HepG2 (cell line): ENCODE measurements at regions of chr14 and their contacts with region 1.

Region 1: GRCh38 chr14:24093901-24094761 is at the start of gene PCK2:
- DNase-seq: peak; percentile 99
- ATAC-seq: peak; percentile 86
- H3K4me3 ChIP-seq: peak within 1 kb of the TSS; percentile 86 to 98 (median 97)
- H3K27ac ChIP-seq: peak within 1 kb of the TSS; percentile 87
- H3K4me1 ChIP-seq: peaks cover 62% of the 10 kb centered on the region
- H3K27me3 ChIP-seq: peaks cover 0 to 6% of the 10 kb centered on the region in 2 experiments; a peak in 1 of 5 replicates
- CTCF ChIP-seq: peak; percentile 66
- EP300 ChIP-seq: peak; percentile 23 to 86; a peak in 3 of 4 replicates
- POLR2A ChIP-seq: peak in 1 of 2 experiments; percentile 98; a peak in 2 of 4 replicates
- RAD21 ChIP-seq: peak; percentile 83
- total RNA-seq, gene PCK2: 118 and 129 TPM in 2 replicates

Region 2: DNA sequence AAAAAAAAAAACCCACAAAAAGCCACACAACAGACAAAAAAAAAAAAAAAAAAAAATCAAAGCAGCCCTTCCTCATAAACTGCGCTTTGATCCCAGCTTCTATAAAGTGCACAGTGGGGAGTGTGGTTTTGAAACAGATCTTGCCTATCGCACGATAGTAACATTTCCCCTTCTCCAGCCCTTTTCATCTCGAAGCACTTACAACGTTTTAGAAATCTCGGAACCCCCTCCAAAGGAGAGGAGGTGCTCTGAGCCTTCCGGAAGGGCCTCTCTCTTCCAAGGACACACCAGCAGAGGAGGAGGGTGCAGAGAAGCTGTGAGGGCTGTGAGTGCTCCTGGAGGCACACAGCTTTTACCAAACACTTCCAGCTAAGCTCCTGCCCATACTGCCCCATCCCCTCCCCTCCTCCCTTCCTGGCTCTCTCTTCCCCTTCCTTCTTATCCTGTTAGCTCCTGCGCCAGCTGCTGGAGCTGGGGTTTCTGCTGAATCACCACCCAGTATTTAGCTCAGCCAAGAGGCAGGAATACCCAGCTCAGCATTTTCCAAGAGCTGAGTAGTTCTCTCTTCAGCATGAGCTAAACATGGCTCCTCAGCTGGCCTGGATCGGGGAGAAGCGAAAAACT is 939.1 kb before region 1 on chr14:
- CTCF ChIA-PET with region 1: no interaction called
- POLR2A ChIA-PET with region 1: no interaction called
- in situ Hi-C with region 1: no loop called
- intact Hi-C with region 1: no loop called
- DNase-seq: no peak
- ATAC-seq: peak; percentile 6; the same call in 1 of the 3 replicates
- H3K4me3 ChIP-seq: no peak overlapping the region
- H3K27ac ChIP-seq: no peak overlapping the region
- H3K4me1 ChIP-seq: no peaks in the 10 kb centered on the region
- H3K27me3 ChIP-seq: peaks cover 12 to 71% of the 10 kb centered on the region in 2 experiments
- CTCF ChIP-seq: no peak
- EP300 ChIP-seq: no peak
- POLR2A ChIP-seq: no peak
- RAD21 ChIP-seq: no peak

Region 3: DNA sequence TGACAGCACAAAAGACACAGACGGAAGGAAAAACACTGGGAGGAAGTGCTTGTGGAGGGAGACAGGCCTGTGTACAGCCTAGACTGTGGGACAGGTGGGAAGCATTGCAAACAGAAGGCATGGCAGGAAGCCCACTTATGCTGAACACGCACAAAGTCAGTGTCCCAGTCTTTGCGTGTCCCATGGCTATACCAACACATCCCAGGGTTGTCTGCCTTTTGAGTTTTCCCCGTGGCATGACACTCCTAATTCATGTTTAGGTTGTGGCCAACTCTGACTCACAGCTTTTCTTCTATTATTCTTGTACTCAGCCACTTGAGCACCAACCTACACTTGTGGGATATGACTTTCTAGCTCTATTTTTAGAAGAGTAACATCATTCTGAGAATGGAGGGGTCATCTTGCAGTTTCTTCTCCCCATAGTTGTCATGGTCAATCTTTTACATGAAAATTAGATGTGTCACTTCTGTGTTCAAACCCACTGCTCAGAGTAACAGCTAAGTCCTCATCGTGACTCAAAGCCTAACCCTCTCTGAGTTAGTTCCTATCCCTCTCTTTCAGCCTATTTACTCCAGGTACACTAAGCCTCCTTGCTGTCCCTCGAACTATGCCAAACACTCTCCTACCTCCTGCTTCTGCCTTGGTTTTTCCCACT is 488.1 kb before region 1 on chr14:
- CTCF ChIA-PET with region 1: no interaction called
- POLR2A ChIA-PET with region 1: interaction called, 6 read pairs
- in situ Hi-C with region 1: no loop called
- intact Hi-C with region 1: loop called (anchors 5 kb)
- DNase-seq: no peak
- ATAC-seq: no peak
- H3K4me3 ChIP-seq: no peak overlapping the region
- H3K27ac ChIP-seq: no peak overlapping the region
- H3K4me1 ChIP-seq: peaks cover 88% of the 10 kb centered on the region
- H3K27me3 ChIP-seq: no peaks in the 10 kb centered on the region
- CTCF ChIP-seq: no peak
- EP300 ChIP-seq: no peak
- POLR2A ChIP-seq: 0 out of 4 replicates have a peak, but pooled peaks of 1 of the 2 experiments have one; percentile 7
- RAD21 ChIP-seq: no peak

Region 4: GRCh38 chr14:24051789-24052655 is 42.1 kb before region 1 on chr14 and contains the start of gene CARMIL3:
- CTCF ChIA-PET with region 1: interaction called, 109 read pairs
- POLR2A ChIA-PET with region 1: interaction called, 226 read pairs
- in situ Hi-C with region 1: loop called (anchors 5 kb)
- intact Hi-C with region 1: no loop called
- DNase-seq: peak; percentile 56
- ATAC-seq: peak; percentile 85
- H3K4me3 ChIP-seq: peak within 1 kb of the TSS; percentile 61 to 85 (median 71)
- H3K27ac ChIP-seq: no peak within 1 kb of the TSS
- H3K4me1 ChIP-seq: peaks cover 31% of the 10 kb centered on the region
- H3K27me3 ChIP-seq: peaks cover 20 to 77% of the 10 kb centered on the region in 2 experiments
- CTCF ChIP-seq: 0 out of 2 replicates have a peak, but pooled peaks have one; percentile 7
- EP300 ChIP-seq: no peak
- POLR2A ChIP-seq: no peak
- RAD21 ChIP-seq: peak; percentile 35; the same call in 1 of the 2 replicates
- total RNA-seq, gene CARMIL3: 0.13 and 0.27 TPM in 2 replicates

Region 5: GRCh38 chr14:24108336-24108874 is 14.3 kb after region 1 on chr14:
- CTCF ChIA-PET with region 1: interaction called, 31 read pairs
- POLR2A ChIA-PET with region 1: interaction called, 627 read pairs
- in situ Hi-C with region 1: no loop called
- intact Hi-C with region 1: loop called (anchors 1 kb)
- DNase-seq: no peak
- ATAC-seq: no peak
- H3K4me3 ChIP-seq: no peak overlapping the region
- H3K27ac ChIP-seq: no peak overlapping the region
- H3K4me1 ChIP-seq: peaks cover 60% of the 10 kb centered on the region
- H3K27me3 ChIP-seq: no peaks in the 10 kb centered on the region
- CTCF ChIP-seq: no peak
- EP300 ChIP-seq: no peak
- POLR2A ChIP-seq: no peak
- RAD21 ChIP-seq: no peak

Region 6: DNA sequence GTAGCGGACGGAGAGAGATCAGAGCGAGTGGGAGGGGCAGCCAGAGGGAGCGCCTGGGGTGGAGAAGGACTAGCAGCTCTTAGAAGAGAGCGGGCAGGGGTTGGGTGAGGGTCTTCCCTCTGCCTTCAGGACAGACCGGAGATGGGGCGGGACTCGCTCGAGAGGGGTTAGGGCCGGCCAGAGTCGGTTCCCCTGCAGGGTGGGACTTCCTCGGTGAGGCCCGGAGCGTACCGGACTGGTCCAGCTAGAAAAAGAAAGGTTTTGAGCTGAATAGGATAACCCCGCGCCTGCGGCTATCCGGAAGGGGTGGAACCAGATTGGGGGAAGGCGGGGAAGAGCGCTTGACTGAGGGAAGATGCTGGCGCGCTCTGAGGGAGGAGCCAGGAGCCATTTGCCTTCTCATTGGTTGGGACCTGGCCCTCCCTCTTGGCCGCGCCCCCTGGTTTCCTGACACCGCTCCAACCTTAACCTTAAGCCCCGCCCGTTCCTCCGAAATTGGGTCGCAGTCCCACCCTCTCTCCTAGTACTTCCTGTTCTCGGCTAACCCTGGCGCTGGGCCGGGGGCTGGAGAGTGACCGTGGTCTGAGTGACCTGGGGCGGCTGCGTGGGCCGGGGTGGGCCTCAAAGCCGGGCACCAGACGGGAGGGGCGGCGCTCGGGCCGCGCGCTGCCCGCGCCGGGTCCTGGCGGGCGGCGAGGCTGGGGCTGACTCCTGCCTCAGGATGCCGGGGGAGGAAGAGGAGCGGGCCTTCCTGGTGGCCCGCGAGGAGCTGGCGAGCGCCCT is 53.0 kb after region 1 on chr14 and contains the start of gene RNF31:
- CTCF ChIA-PET with region 1: no interaction called
- POLR2A ChIA-PET with region 1: interaction called, 181 read pairs
- in situ Hi-C with region 1: no loop called
- intact Hi-C with region 1: no loop called
- DNase-seq: peak; percentile 100
- ATAC-seq: peak; percentile 90
- H3K4me3 ChIP-seq: peak within 1 kb of the TSS; percentile 91 to 100 (median 96)
- H3K27ac ChIP-seq: peak within 1 kb of the TSS; percentile 76
- H3K4me1 ChIP-seq: peaks cover 59% of the 10 kb centered on the region
- H3K27me3 ChIP-seq: peaks cover 0 to 3% of the 10 kb centered on the region in 2 experiments; a peak in 1 of 5 replicates
- CTCF ChIP-seq: no peak; the same call in 1 of the 2 replicates
- EP300 ChIP-seq: no peak
- POLR2A ChIP-seq: peak in 1 of 2 experiments; percentile 67; a peak in 2 of 4 replicates
- RAD21 ChIP-seq: peak; percentile 39
- total RNA-seq, gene RNF31: 65.9 and 86.8 TPM in 2 replicates

Region 7: GRCh38 chr14:24215495-24216344 is 121.6 kb after region 1 on chr14 and contains the start of gene MDP1:
- CTCF ChIA-PET with region 1: no interaction called
- POLR2A ChIA-PET with region 1: interaction called, 75 read pairs
- in situ Hi-C with region 1: no loop called
- intact Hi-C with region 1: no loop called
- DNase-seq: peak; percentile 95
- ATAC-seq: peak; percentile 81
- H3K4me3 ChIP-seq: peak within 1 kb of the TSS; percentile 67 to 98 (median 81)
- H3K27ac ChIP-seq: peak within 1 kb of the TSS; percentile 72
- H3K4me1 ChIP-seq: peaks cover 39% of the 10 kb centered on the region
- H3K27me3 ChIP-seq: no peaks in the 10 kb centered on the region; a peak in 1 of 5 replicates
- CTCF ChIP-seq: peak; percentile 100
- EP300 ChIP-seq: peak in 1 of 2 experiments; percentile 74; a peak in 3 of 4 replicates
- POLR2A ChIP-seq: peak in 1 of 2 experiments; percentile 97; a peak in 2 of 4 replicates
- RAD21 ChIP-seq: peak; percentile 96
- total RNA-seq, gene MDP1: 48.7 and 66.0 TPM in 2 replicates

Region 8: GRCh38 chr14:24259252-24259995 is 165.3 kb after region 1 on chr14:
- CTCF ChIA-PET with region 1: no interaction called
- POLR2A ChIA-PET with region 1: no interaction called
- in situ Hi-C with region 1: no loop called
- intact Hi-C with region 1: no loop called
- DNase-seq: no peak
- ATAC-seq: no peak
- H3K4me3 ChIP-seq: no peak overlapping the region
- H3K27ac ChIP-seq: no peak overlapping the region
- H3K4me1 ChIP-seq: peaks cover 33% of the 10 kb centered on the region
- H3K27me3 ChIP-seq: no peaks in the 10 kb centered on the region
- CTCF ChIP-seq: no peak
- EP300 ChIP-seq: no peak
- POLR2A ChIP-seq: no peak
- RAD21 ChIP-seq: no peak

Region 9: DNA sequence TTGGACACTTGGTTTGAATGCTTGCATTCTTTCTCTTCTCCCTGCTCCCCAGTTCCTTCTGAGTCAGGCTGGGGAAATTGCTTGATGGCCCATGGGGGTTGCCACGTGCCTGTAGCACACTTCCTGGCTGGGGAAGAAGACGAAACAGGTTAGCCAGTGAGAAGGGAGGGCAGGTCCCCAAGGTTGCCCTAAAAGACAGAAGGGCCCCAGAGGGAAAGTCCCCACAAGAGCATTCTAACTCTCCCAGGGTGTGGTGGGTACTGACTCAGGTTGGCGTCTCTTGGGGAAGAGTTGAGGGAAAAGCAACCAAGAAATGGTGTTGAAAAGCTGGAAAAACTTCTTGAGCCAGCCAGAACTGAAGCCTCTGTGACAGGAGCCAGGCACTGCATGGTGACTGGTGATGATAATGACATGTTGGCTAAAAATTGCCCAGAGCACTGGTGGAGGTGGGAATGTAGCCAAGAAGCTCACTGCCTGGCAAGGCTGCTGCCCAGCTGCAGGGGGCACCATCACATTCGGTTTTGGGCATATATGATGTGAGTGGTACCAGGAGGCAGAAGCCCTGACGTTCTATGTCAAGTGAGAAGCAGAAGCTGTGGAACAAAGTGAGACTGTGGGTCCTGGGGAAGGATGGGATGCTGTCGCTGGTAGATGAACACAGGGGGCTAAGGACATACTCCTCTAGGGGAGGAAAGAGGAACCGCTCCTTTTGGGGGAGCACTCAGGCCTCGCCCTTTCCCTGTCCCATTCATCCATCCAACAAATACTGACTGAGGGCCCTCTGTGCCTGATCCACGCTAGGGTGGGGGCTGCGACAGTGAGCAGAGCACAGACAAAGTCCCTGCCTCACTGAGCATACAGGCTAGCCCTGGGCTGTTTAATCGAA is 185.4 kb after region 1 on chr14:
- CTCF ChIA-PET with region 1: no interaction called
- POLR2A ChIA-PET with region 1: no interaction called
- in situ Hi-C with region 1: no loop called
- intact Hi-C with region 1: no loop called
- DNase-seq: no peak
- ATAC-seq: no peak
- H3K4me3 ChIP-seq: no peak overlapping the region
- H3K27ac ChIP-seq: no peak overlapping the region
- H3K4me1 ChIP-seq: no peaks in the 10 kb centered on the region
- H3K27me3 ChIP-seq: no peaks in the 10 kb centered on the region
- CTCF ChIP-seq: peak; percentile 33; the same call in 1 of the 2 replicates
- EP300 ChIP-seq: no peak
- POLR2A ChIP-seq: 0 out of 4 replicates have a peak, but pooled peaks of 1 of the 2 experiments have one; percentile 10
- RAD21 ChIP-seq: no peak